Motor neuron (in vitro differentiated cells): ENCODE measurements at regions of chr19 and their contacts with region 1.

Region 1: DNA sequence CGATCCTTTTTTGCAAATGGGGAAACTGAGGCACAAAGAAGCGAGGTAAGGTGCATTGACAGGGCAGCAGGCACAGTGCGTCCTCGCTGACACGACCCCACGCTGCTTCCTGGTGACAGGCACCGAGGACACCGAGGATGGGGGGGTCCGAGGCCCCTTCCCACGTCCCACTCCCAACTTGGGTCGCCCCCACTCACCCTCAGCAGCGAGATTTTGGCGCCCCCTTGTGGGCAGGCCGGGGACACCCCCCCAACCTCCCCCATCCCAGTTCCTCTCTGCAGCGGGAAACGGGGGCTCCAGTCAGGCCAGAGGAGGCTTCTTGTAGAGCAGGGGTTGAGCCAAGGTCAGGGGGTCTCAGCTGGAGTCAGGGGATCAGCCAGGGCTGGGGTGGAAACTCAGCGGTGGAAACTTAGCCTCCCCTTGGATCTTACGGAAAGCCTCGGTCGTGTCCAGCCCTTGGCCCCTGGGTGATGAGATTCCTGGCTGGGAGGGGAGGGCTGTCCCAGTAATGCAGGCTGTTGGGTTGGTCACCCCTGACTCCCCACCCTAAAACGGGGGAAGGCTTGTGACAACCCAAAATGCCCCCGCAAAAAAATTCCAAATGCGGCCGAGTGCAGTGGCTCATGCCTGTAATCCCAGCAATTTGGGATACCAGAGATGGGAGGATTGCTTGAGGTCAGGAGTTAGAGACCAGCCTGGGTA is 8.2 kb downstream of the SMIM24 start:
- ATAC-seq: peak; percentile 13 to 51 (median 38)
- H3K4me3 ChIP-seq: no peak overlapping the region
- H3K27ac ChIP-seq: no peak overlapping the region
- H3K4me1 ChIP-seq: no peaks in the 10 kb centered on the region

Region 2: GRCh38 chr19:3324321-3324856 is 147.7 kb before region 1 on chr19:
- in situ Hi-C with region 1: loop called in 6 of 9 experiments (anchors 5 to 25 kb)
- ATAC-seq: peak in 3 of 8 experiments; percentile 28 to 48 (median 41)
- H3K4me3 ChIP-seq: no peak overlapping the region
- H3K27ac ChIP-seq: no peak overlapping the region
- H3K4me1 ChIP-seq: no peaks in the 10 kb centered on the region

Region 3: DNA sequence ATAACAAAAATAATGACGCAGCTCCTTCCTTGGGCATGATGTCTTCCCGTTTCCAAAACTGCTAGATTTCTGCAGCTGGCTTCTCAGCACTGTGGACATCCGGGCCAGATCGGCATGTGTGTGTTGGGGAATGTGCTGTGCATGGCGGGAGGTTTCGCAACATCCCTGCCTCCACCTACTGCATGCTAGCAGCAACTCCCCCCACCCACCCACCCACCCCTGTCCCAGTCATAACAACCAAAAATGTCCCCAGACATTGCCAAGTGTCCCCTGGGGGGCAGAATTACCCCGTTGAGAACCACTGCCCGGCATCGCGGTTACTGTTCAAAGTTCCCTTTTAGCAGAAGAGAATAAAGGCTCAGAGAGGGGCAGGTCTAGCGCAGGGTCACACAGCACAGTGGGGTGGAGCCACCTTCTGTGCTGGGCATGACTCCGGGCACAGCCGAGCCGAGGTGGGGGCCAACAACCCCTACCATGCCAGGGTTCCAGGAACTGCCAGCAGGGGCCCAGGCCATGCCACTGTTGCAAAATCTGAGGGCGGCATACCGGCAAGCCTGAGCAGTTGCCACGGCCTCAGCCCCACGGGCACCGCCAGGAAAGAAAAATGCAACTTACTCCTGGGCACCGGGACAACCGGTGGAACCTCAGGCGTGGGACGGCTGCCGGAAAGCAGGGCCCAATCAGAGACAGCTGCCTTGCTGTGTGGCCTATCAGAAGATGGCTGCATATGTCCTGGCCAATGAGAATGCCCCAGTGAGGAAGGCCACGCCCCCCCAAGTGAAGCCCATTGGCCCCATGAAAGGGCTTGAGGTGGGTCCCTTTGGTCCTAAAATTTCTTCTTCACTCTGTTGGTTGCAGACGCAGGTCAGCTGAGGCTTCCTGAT is 128.2 kb before region 1 on chr19:
- in situ Hi-C with region 1: loop called in 3 of 9 experiments (anchors 25 kb)
- ATAC-seq: peak in 3 of 8 experiments; percentile 90 to 97 (median 96)
- H3K4me3 ChIP-seq: no peak overlapping the region
- H3K27ac ChIP-seq: no peak overlapping the region
- H3K4me1 ChIP-seq: no peaks in the 10 kb centered on the region